GM10248 (cell line): ENCODE measurements at regions of chr15 and their contacts with region 1.

Region 1: GRCh38 chr15:31265871-31266711 is 60.5 kb upstream of the KLF13 start:
- DNase-seq: peak; percentile 84
- CTCF ChIP-seq: no peak

Region 2: DNA sequence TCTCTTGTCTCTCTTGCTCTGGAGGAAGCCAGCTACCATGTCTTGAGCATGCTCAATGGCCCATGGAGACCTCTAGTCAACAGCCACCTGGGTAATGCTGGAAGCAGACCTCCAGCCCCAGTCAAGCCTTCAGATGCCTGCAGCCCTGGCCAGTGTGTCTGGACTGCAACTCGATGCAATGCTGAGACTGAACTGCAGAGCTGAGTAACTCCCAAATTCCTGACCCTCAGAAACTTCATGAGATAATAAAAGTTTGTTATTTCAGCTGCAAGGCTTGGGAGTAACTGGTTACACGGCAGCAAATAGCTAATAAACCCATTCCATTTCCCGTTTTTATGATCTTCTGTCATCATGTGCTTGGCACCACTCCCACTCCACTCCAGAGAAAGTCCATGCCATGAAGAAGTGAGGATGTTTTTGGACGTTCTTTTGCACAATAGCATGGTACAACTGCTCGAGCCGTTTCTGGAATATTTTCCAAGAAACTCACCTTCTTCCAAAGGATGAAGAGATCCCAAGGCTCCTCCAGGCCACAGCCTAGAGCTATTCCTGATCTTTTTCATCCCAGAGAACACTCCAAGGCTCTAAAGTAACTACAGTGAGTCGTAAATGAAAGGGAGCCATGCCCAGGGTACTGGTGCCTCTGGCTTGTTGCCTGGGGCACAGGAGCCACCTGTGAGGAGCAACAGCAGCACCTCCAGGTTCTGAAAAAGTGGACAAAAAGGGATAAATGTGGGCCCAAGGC is 11.5 kb before region 1 on chr15:
- CTCF ChIA-PET with region 1: interaction called, 56 read pairs
- POLR2A ChIA-PET with region 1: no interaction called
- DNase-seq: no peak
- CTCF ChIP-seq: no peak

Region 3: DNA sequence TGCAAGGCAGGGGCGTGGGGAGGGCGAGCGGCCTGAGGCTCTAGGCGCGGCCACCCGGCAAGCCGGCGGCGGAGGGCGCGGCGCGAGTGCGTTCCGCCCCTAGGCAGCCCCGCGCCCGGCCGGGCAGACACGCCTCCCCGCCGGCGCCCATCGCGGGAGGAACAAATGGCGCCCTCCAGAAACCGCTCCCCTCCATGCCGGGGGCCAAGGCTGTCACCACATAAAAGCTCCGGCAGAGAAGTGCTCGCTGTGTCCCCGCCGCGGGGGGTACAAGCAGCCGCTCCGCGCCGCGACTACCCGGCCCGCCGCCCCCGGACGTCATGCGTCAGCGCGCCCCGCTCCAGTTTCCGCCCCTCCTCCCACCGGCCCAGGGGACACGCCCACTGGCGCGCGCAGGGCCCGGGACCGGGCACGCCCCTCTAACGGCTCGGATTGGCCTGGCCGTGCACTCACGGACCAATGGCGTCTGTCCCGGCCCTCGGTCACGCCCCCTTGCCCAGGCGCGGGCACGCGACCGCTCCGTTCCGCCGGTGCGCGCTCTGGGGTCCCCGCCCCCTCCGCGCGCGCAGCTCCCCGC is 60.2 kb after region 1 on chr15:
- CTCF ChIA-PET with region 1: interaction called, 19 read pairs
- POLR2A ChIA-PET with region 1: interaction called, 10 read pairs
- DNase-seq: peak; percentile 98
- CTCF ChIP-seq: no peak